Left cardiac atrium (tissue), 4 donors: ENCODE measurements at regions of chr5 and their contacts with region 1.

Region 1: DNA sequence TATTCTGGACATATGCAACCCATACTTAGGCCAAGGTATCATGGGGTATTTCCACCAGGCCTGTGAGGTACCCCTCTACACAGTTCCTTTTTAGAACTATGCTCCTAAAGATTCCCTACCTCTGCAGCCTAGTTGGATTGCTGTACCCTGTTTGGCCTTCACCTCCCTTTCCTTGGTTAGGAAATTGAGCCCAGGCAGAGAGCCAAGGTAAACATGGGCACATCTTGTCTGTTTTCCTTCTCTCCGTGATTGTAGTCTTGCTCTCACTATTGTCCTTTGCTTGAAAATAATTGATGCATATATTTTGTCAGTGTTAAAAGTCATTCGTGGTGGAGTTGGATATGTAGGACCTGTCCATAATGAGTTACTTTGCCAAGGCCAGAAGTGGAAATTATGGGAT is 26.7 kb downstream of the BDP1 start:
- DNase-seq: peak; percentile 32
- ATAC-seq: peak in 1 of 2 donors; percentile 54

Region 2: DNA sequence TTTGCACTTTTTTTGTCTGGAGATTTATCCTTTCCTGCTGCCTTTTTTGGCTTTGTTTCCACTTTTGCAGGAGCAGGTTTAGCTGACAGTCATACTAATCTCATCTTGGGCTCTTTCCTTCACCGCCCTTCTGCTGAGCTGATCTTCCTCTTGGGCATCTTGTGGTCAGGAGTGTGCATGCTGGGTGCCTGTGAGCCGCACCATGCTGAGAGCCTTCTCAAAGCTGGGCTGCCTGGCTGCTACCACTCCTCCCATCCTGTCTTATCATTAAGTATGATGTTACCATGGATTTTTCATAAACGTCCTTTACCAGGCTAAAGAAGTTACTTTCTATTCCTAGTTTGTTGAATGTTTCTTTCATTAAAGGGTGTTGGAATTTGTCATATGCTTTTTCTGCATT is 55.6 kb after region 1 on chr5:
- intact Hi-C with region 1: loop called in 1 of 2 experiments (anchors 10 kb)
- DNase-seq: no peak
- ATAC-seq: peak in 1 of 2 donors; percentile 19